PC-3 (cell line): ENCODE measurements at regions of chr5 and their contacts with region 1.

Region 1: GRCh38 chr5:151080623-151081430 is at the start of gene TNIP1:
- DNase-seq: peak; percentile 94
- ATAC-seq: peak; percentile 86
- H3K4me3 ChIP-seq: peak within 1 kb of the TSS; percentile 94
- H3K27ac ChIP-seq: peak within 1 kb of the TSS; percentile 92
- H3K4me1 ChIP-seq: peaks cover 84% of the 10 kb centered on the region
- H3K27me3 ChIP-seq: no peaks in the 10 kb centered on the region
- CTCF ChIP-seq: no peak
- total RNA-seq, gene TNIP1: 90.0 and 139 TPM in 2 replicates

Region 2: DNA sequence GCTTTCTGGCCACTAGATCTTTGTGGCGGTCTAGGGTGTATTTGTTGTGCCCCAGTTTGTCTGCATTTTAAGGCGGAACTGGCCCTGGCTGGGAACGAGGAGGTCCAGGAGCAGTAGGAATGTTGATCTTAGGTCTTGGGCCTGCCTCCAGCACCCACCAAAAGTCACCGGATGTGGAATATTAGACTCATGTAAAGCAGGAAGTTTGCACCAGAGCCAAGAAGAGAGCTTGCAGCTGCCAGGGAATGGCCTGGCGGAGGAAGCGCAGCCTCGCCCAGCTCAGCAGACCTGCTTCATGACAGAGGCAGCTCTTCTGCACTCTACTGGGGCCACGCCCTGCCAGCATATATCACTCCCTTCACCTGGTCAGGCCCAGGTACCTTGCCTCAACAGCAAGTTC is 57.2 kb before region 1 on chr5:
- CTCF ChIA-PET with region 1: no interaction called
- POLR2A ChIA-PET with region 1: no interaction called
- intact Hi-C with region 1: loop called (anchors 2 kb)
- DNase-seq: peak; percentile 95
- ATAC-seq: peak; percentile 90
- H3K4me3 ChIP-seq: 0 out of 2 replicates have a peak overlapping the region, but pooled peaks have one; percentile 12
- H3K27ac ChIP-seq: peak overlapping the region; percentile 93
- H3K4me1 ChIP-seq: peaks cover 31% of the 10 kb centered on the region
- H3K27me3 ChIP-seq: no peaks in the 10 kb centered on the region
- CTCF ChIP-seq: no peak

Region 3: DNA sequence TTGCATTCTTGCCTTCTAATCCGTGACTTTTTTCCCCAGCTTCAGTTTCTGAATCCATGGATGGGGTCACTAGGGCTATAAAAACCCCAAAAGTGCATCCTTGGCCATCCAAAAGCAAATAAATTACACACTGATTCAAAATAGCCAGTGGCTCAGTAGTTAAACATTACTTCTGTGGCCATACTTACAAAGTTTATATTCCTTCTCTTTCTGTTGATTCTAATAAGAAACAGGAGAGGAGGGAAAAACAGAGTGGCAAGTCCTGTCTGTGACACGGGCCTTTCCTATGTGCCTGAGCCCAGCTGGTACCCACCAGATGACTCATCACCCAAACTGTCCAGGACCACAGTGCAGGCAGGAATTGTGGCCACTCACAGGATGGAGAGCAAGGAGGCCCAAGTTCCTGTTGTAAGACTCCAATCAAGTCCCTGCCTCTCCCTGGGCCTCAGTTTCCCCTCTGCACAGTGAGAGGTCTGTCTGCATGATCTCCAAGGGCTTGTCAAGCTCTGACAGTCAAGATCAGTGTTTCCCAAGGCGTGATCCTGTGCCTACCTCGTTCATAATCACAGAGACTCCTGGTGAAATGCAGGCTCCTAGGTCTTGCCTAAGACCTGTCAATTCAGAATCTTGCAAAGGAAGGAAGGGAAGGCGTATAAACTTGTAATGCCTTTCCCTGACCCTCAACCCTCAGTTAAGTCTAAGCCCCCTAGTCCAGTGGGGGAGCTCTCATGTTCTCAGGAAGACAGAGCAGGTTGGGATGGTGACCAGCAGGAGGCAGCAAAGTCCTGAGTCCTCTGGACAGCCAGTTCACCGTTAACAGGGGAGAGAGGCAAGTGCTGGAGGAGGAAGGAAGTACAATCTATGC is 29.5 kb before region 1 on chr5:
- CTCF ChIA-PET with region 1: interaction called, 6 read pairs
- POLR2A ChIA-PET with region 1: interaction called, 4 read pairs
- intact Hi-C with region 1: loop called (anchors 2 kb)
- DNase-seq: peak; percentile 84
- ATAC-seq: peak; percentile 78
- H3K4me3 ChIP-seq: no peak overlapping the region
- H3K27ac ChIP-seq: no peak overlapping the region
- H3K4me1 ChIP-seq: no peaks in the 10 kb centered on the region
- H3K27me3 ChIP-seq: no peaks in the 10 kb centered on the region
- CTCF ChIP-seq: peak; percentile 97

Region 4: DNA sequence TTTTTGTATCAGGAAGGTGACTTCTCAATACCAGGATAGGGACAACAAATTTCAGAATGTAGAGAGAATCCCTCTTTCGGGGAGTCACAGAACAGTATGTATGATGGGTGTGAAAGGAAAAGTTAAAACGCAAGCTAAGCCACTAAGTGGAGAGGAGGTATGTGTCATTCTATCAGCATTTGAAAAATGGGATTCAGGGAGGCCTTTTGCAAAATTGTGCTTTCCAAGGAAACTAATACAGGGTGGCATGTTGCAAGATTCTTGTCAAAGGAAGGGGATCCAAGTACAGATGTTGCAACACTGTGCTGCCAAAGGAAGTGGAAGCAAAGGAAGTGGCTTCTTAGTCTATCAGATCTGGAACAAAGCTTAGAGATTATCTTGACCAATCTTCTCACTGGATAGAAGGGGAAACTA is 12.7 kb after region 1 on chr5:
- CTCF ChIA-PET with region 1: no interaction called
- POLR2A ChIA-PET with region 1: interaction called, 3 read pairs
- intact Hi-C with region 1: loop called (anchors 1 kb)
- DNase-seq: peak; percentile 87
- ATAC-seq: peak; percentile 43
- H3K4me3 ChIP-seq: peak overlapping the region; percentile 18; the same call in 1 of the 2 replicates
- H3K27ac ChIP-seq: peak overlapping the region; percentile 96
- H3K4me1 ChIP-seq: peaks cover 42% of the 10 kb centered on the region
- H3K27me3 ChIP-seq: no peaks in the 10 kb centered on the region
- CTCF ChIP-seq: no peak